ENCODE measurements at regions of chr9 and their contacts with region 1.

Region 1: DNA sequence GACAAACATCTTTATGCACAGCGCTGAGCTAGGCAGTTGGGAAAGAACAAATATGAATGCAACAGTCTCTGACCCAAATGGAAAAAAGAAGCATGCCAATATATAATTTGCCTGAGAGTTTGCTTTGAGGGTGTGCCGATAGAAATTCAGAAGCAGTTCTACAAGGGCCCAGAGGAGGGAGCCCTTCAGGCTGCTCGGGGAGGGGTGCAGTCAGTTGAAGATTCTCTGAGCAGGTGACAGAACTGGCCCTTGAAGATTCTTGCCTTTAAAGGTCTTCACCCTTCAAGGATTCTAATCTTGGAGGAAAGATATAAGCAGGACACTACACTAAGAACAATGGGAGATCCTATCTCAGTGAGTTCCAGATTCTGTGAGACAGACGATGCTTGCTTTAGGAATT is 3.7 kb upstream of the PAPPA start:
- DNase-seq: no peak
- ATAC-seq: peak; percentile 81
- H3K4me3 ChIP-seq: no peak overlapping the region
- H3K27ac ChIP-seq: no peak overlapping the region
- H3K4me1 ChIP-seq: no peaks in the 10 kb centered on the region
- H3K27me3 ChIP-seq: peaks cover 2 to 44% of the 10 kb centered on the region in 2 donors
- CTCF ChIP-seq: peak; percentile 31 to 41

Region 2: DNA sequence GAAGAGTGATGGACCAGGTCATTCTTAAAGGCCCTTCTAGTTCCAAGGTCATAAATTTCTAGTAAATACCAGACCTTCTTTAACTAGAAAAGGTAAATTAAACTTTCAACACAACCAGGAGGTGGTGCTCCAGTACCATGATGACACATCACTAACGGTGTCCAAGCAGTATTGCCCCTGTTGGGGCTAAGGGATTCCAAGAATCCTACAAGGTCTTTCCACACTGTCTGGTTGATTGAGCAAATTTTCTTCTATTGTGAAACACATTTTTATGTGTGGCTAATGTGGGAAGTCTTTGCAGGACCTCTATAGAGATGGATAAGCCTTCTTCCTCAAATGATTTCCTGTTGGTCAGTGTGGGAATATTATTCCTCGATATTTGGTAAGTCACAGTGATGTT is 455.8 kb before region 1 on chr9:
- intact Hi-C with region 1: loop called in 1 of 2 experiments (anchors 10 kb)
- DNase-seq: peak in 2 of 4 donors; percentile 3 to 25
- ATAC-seq: peak; percentile 77
- H3K4me3 ChIP-seq: no peak overlapping the region
- H3K27ac ChIP-seq: no peak overlapping the region
- H3K4me1 ChIP-seq: no peaks in the 10 kb centered on the region
- H3K27me3 ChIP-seq: no peaks in the 10 kb centered on the region
- CTCF ChIP-seq: no peak

Region 3: GRCh38 chr9:115832031-115832430 is 317.8 kb before region 1 on chr9:
- intact Hi-C with region 1: no loop called
- DNase-seq: no peak
- ATAC-seq: no peak
- H3K4me3 ChIP-seq: no peak overlapping the region
- H3K27ac ChIP-seq: no peak overlapping the region
- H3K4me1 ChIP-seq: no peaks in the 10 kb centered on the region
- H3K27me3 ChIP-seq: no peaks in the 10 kb centered on the region
- CTCF ChIP-seq: no peak

Region 4: GRCh38 chr9:115978659-115979096 is 171.2 kb before region 1 on chr9:
- intact Hi-C with region 1: no loop called
- DNase-seq: peak in 2 of 4 donors; percentile 61 to 76
- ATAC-seq: peak; percentile 20
- H3K4me3 ChIP-seq: no peak overlapping the region
- H3K27ac ChIP-seq: no peak overlapping the region
- H3K4me1 ChIP-seq: peaks cover 0 to 9% of the 10 kb centered on the region in 2 donors
- H3K27me3 ChIP-seq: no peaks in the 10 kb centered on the region
- CTCF ChIP-seq: no peak

Region 5: DNA sequence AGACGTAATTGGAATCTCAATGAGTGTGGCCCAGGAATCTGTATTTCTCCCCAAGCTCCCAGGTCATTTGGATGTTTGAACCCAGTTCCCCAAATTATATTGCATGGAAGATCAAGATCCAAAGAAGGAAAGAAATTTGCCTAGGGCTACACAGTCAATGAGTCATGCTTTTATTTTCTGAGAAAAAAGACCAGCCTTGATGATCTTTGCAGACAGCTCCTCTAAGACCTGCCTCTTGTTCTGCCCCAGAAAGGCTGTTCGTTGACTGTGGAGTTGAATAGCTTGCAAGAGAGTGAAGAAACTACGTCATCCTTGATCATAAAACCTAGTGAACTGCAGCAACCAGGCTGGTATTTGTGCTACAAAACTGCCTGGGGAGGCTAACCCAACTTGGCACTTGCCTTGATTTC is 267.6 kb after region 1 on chr9:
- intact Hi-C with region 1: no loop called
- DNase-seq: no peak
- ATAC-seq: no peak
- H3K4me3 ChIP-seq: no peak overlapping the region
- H3K27ac ChIP-seq: no peak overlapping the region
- H3K4me1 ChIP-seq: no peaks in the 10 kb centered on the region
- H3K27me3 ChIP-seq: no peaks in the 10 kb centered on the region
- CTCF ChIP-seq: no peak

Region 6: DNA sequence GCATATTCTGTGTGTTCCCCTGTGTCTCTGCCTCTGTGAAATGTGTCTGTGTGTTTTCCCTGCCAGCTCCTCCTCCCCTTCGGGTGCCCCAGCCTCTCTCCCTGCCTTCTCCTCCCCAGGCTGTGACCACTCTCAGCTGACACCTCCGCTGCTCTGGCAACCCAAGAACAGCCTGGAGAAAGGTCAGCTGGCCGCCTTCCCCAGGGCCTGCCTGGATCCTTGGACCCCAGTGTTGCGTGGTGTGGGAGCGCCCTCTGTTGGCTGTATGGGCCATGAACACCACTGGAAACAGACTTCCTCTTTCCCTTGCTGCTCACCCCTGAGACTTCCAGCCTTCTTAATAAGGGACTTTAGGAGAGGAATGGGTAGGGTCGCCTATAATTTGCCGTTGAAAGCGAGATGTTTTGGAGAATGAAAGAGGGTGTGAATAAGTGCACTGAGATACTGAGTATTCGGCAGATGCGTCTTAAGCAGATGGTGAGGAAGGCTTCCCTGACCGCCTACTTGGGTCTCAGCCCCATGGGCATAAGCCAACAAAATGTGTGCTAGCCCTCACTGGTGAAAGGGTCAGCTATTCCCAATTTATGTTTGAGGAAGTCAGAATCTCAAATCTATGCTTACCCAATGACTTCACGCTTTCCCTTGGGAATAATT is 422.4 kb after region 1 on chr9:
- intact Hi-C with region 1: loop called in 1 of 2 experiments (anchors 5 kb)
- DNase-seq: peak; percentile 78 to 94 (median 90)
- ATAC-seq: peak; percentile 91
- H3K4me3 ChIP-seq: no peak overlapping the region
- H3K27ac ChIP-seq: no peak overlapping the region
- H3K4me1 ChIP-seq: peaks cover 4 to 6% of the 10 kb centered on the region in 2 donors
- H3K27me3 ChIP-seq: no peaks in the 10 kb centered on the region
- CTCF ChIP-seq: peak; percentile 74 to 75

Measured in left lung (tissue), 14 donors.